Activated T-helper 1 cell treated with anti-CD3 and anti-CD28 coated beads, Interleukin-12 subunit alpha, Interleukin-12 subunit beta, Interleukin-2, Interleukin-4 antibody, amounts not matched to agents 30 ng/mL and 10 ng/mL and 1 ng/mL, durations not matched to agents 14 hours and 24 hours and 36 hours (primary cell): ENCODE measurements at regions of chr2 and their contacts with region 1.

Region 1: GRCh38 chr2:227805578-227805977 is 8.1 kb upstream of the CCL20 start:
- DNase-seq: no peak
- H3K4me3 Mint-ChIP-seq: peak overlapping the region; percentile 67
- H3K27ac Mint-ChIP-seq: peak overlapping the region; percentile 77
- H3K4me1 Mint-ChIP-seq: peaks cover 8% of the 10 kb centered on the region
- H3K27me3 Mint-ChIP-seq: peaks cover 2% of the 10 kb centered on the region

Region 2: DNA sequence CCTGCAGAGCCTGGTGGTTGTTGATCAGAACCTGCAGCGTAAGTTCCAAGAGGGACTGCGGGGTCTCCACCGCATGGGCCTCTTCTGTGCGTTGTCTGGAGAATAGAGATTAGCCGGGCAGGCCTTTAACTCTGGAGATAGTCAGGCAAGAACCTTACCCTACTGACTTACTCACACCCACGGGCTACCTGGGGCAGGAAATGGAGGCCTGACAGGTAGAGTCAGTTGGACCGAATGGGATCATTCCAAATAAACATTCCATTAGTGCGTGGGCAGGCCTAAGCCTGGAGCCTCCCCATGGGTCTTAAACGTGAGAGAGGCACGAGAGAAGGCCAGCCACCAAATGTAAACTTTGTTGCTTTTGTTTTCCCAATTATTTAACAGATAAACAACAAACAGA is 61.3 kb before region 1 on chr2:
- intact Hi-C with region 1: no loop called
- DNase-seq: no peak
- H3K4me3 Mint-ChIP-seq: no peak overlapping the region
- H3K27ac Mint-ChIP-seq: no peak overlapping the region
- H3K4me1 Mint-ChIP-seq: no peaks in the 10 kb centered on the region
- H3K27me3 Mint-ChIP-seq: no peaks in the 10 kb centered on the region

Region 3: DNA sequence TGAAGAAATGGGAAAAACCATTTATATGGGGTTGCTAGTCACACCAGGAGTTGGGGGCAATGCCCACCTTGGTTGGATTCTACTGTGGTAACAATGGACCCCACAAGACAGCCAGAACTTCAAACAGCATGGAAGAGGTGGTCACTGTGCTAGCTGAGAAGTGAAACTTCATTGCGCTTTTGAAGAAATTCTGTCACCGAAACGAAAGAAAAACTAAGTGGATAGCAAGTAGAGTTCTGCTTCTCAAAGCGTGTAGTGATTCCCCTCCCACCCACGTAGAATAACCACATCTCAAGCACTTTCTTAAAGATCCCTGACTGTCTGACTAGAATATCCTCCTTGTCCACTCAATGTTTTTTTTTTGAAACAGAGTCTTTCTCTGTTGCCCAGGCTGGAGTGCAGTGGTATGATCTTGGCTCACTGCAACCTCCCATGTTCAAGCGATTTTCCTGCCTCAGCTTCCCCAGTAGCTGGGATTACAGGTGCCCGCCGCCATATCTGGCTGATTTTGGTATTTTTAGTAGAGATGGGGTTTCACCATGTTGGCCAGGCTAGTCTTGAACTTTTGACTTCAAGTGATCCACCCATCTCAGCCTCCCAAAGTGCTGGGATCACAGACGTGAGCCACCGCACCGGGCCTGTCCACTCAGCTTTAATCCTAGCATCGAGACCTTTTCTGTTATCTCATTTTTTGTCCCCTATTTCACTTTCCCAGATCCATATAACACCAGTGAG is 22.0 kb before region 1 on chr2:
- intact Hi-C with region 1: loop called (anchors 2 kb)
- DNase-seq: no peak
- H3K4me3 Mint-ChIP-seq: peak overlapping the region; percentile 44
- H3K27ac Mint-ChIP-seq: peak overlapping the region; percentile 61
- H3K4me1 Mint-ChIP-seq: peaks cover 15% of the 10 kb centered on the region
- H3K27me3 Mint-ChIP-seq: peaks cover 2% of the 10 kb centered on the region

Region 4: GRCh38 chr2:227817850-227818674 is 12.5 kb after region 1 on chr2:
- intact Hi-C with region 1: loop called (anchors 1 kb)
- DNase-seq: peak; percentile 21
- H3K4me3 Mint-ChIP-seq: no peak overlapping the region
- H3K27ac Mint-ChIP-seq: peak overlapping the region; percentile 77
- H3K4me1 Mint-ChIP-seq: peaks cover 21% of the 10 kb centered on the region
- H3K27me3 Mint-ChIP-seq: peaks cover 5% of the 10 kb centered on the region

Region 5: GRCh38 chr2:227881866-227882517 is 76.4 kb after region 1 on chr2:
- intact Hi-C with region 1: no loop called
- DNase-seq: no peak
- H3K4me3 Mint-ChIP-seq: no peak overlapping the region
- H3K27ac Mint-ChIP-seq: no peak overlapping the region
- H3K4me1 Mint-ChIP-seq: peaks cover 5% of the 10 kb centered on the region
- H3K27me3 Mint-ChIP-seq: peaks cover 4% of the 10 kb centered on the region

Region 6: GRCh38 chr2:228197504-228197903 is 391.9 kb after region 1 on chr2:
- intact Hi-C with region 1: no loop called
- DNase-seq: no peak
- H3K4me3 Mint-ChIP-seq: no peak overlapping the region
- H3K27ac Mint-ChIP-seq: no peak overlapping the region
- H3K4me1 Mint-ChIP-seq: no peaks in the 10 kb centered on the region
- H3K27me3 Mint-ChIP-seq: no peaks in the 10 kb centered on the region